Heart left ventricle (tissue), 16 donors: ENCODE measurements at regions of chr22 and their contacts with region 1.

Region 1: DNA sequence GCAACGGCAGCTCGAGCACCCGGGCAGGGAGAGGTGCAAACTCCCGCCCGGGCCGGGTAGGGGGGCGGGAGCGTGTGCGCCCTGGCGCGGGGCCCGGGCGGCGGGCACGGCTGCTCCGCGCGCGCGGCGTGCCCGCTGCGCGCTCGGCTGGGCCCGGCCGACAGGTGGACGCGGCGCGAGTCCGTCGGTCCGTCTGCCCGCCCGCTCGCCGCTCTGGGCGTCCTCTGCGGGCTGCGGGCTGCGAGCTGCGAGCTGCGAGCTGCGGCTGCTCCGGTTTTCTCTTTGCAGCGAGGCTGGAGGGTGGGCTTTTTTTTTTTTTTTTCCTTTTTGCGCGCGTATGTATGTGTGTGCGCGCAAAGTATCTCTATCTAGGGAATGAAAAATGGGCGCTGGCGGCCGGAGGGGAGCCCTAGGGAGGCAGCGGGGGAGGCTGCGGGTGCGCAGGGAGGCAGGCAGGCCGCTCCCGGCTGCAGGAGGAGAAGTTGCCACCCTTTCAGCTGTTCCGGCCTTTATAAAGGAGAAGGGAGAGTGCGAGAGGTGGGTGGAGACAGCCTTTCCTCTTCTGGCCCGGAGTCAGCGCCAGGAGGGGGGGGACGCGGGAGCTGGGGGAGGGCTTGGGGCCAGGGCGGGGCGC is at the start of gene PDGFB:
- DNase-seq: peak; percentile 74 to 80 (median 78)
- ATAC-seq: peak; percentile 56 to 73 (median 61)
- H3K4me3 ChIP-seq: peak within 1 kb of the TSS; percentile 66 to 96 (median 74)
- H3K27ac ChIP-seq: peak within 1 kb of the TSS; percentile 70 to 98 (median 92)
- H3K4me1 ChIP-seq: peaks cover 0 to 78% (median 39%) of the 10 kb centered on the region in 12 donors
- H3K27me3 ChIP-seq: peaks cover 0 to 37% (median 0%) of the 10 kb centered on the region in 9 donors
- CTCF ChIP-seq: no peak
- POLR2A ChIP-seq: peak in 1 of 2 donors; percentile 77
- total RNA-seq, gene PDGFB: 15.2 to 43.7 (median 21.8) TPM

Region 2: GRCh38 chr22:39277155-39277607 is 32.6 kb after region 1 on chr22:
- intact Hi-C with region 1: loop called in 2 of 10 experiments (anchors 2 to 5 kb)
- DNase-seq: no peak
- ATAC-seq: no peak
- H3K4me3 ChIP-seq: no peak overlapping the region
- H3K27ac ChIP-seq: peak overlapping the region; percentile 17 to 83 (median 58)
- H3K4me1 ChIP-seq: peaks cover 0 to 61% (median 18%) of the 10 kb centered on the region in 12 donors
- H3K27me3 ChIP-seq: no peaks in the 10 kb centered on the region
- CTCF ChIP-seq: no peak
- POLR2A ChIP-seq: no peak

Region 3: DNA sequence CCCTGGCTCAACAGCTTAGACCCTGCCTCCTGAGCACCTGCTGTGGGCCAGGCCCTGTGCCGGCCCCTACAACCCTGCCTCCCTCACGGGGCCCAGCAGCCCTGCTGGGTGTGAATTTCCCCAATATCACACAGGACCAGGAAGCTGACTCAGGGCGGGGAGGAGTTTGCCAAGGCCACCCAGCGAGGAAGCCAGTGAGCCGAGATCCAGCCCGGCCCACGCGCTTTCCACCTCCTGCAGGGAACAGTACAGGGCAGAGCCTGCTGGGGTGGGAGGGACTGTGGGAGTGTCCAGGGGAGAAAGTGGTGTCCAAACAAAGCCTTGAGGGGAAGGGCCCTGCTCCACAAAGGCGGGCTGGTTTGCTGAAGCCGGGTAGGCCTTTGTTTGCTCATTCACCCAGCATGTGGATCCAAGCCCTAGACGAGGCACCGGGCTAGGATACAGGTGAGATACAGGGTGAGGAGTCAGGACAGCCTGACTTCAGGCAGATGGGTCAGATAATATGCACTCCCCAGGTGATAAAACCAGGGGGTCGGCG is 48.0 kb after region 1 on chr22:
- intact Hi-C with region 1: loop called in 6 of 10 experiments (anchors 5 kb)
- DNase-seq: peak; percentile 94 to 96 (median 95)
- ATAC-seq: peak; percentile 84 to 92 (median 90)
- H3K4me3 ChIP-seq: no peak overlapping the region
- H3K27ac ChIP-seq: peak overlapping the region; percentile 47 to 94 (median 84)
- H3K4me1 ChIP-seq: peaks cover 20 to 53% (median 40%) of the 10 kb centered on the region in 12 donors
- H3K27me3 ChIP-seq: no peaks in the 10 kb centered on the region
- CTCF ChIP-seq: no peak
- POLR2A ChIP-seq: peak in 1 of 2 donors; percentile 51

Region 4: GRCh38 chr22:39300186-39300830 is 55.7 kb after region 1 on chr22:
- intact Hi-C with region 1: loop called in 4 of 10 experiments (anchors 5 kb)
- DNase-seq: peak; percentile 65 to 79 (median 71)
- ATAC-seq: peak; percentile 56 to 77 (median 74)
- H3K4me3 ChIP-seq: peak overlapping the region in 10 of 12 donors; percentile 1 to 30 (median 26)
- H3K27ac ChIP-seq: peak overlapping the region; percentile 59 to 87 (median 66)
- H3K4me1 ChIP-seq: peaks cover 6 to 56% (median 43%) of the 10 kb centered on the region in 12 donors
- H3K27me3 ChIP-seq: no peaks in the 10 kb centered on the region
- CTCF ChIP-seq: peak in 5 of 12 donors; percentile 9 to 30 (median 16)
- POLR2A ChIP-seq: no peak

Region 5: DNA sequence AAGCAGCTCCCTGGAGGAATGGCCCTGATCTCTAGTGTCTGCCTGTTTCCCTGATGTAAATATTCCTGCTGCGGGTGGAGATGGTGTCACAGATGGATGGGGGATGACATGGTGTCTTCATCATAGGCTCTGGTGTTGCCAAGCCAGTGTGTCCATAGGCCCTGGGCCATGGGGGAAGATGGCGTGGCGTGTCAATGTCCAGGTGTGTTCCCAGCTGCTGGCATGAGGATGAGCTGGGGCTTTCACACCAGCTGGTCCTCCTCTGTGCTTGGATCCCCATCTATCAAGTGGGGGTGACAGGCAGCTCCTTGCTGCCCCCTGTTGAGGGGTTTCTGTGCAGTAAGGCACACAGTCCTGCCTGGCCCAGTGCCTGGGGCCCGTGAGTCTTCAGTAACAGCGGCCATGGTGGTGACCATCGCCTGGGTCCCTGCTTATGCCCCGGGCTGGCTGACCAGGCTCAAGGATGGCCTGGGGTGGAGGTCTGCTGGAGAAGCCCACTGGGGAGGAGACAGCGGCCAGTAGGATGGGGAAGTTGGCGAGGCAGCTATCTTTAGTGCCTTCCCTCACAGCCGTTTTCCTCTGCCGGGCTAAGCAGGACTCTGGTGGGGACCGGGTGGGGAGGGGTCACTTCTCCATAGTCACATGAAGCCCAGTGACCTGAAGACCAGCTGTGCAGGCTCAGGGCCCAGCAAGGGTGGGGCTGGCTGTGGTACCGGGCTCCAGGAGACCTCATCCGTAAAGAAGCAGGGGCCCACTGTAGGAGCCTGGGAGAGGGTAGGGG is 62.2 kb after region 1 on chr22:
- intact Hi-C with region 1: loop called in 8 of 10 experiments (anchors 5 kb)
- DNase-seq: peak in 2 of 5 donors; percentile 66 to 68
- ATAC-seq: peak in 2 of 4 donors; percentile 14 to 43
- H3K4me3 ChIP-seq: no peak overlapping the region
- H3K27ac ChIP-seq: peak overlapping the region in 3 of 12 donors; percentile 24 to 54 (median 48)
- H3K4me1 ChIP-seq: peaks cover 0 to 34% (median 19%) of the 10 kb centered on the region in 12 donors
- H3K27me3 ChIP-seq: no peaks in the 10 kb centered on the region
- CTCF ChIP-seq: peak; percentile 21 to 54 (median 44)
- POLR2A ChIP-seq: no peak